Transverse colon (tissue), 4 donors: ENCODE measurements at regions of chr5 and their contacts with region 1.

Region 1: DNA sequence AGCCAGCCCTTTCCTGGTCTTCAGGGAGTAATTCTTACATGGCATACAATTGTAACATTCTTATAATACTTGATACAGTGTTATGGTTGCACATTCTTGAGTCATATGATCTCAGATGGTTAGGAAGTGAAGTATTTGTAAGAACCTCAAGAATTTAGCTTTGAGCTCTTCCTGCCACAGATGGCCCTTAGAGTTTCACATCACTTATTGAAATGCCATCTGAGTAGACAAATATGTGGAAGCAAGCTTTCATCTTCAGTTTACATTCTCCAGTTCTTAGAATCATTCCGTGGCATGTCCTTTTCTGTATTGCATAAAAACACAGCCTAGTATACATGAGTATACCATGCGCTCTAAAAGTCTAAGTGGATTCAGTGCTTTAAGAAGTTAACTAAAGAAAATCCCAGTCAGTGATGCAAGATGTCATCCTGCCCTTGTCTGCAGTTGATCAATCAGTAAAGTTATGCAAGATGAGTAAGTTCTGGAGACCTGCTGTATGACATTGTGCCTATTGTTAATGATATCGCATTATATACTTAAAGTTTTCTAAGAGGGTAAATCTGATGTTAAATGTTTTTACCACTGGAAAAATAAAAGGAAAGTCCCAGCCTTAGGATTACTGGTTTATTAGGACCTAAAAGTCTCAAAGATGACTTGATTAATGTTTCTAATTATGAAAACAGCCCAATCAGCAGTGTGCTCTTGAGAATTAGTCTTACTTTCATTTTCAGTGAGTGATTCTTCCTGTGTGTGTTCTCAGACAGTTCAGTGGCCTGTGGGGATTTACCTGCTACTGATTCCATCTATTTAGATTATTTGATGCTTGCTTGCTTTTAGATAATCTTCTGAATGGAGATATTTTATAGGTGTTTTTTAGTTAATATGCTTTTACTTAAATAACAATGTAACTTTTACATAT is 29.4 kb downstream of the RHOBTB3 start:
- DNase-seq: no peak
- H3K4me3 ChIP-seq: no peak overlapping the region
- H3K27ac ChIP-seq: peak overlapping the region; percentile 58 to 73 (median 68)
- H3K4me1 ChIP-seq: peaks cover 0 to 43% (median 29%) of the 10 kb centered on the region in 4 donors
- H3K27me3 ChIP-seq: no peaks in the 10 kb centered on the region
- CTCF ChIP-seq: no peak
- EP300 ChIP-seq: no peak
- POLR2A ChIP-seq: no peak

Region 2: GRCh38 chr5:95655575-95655974 is 105.0 kb before region 1 on chr5:
- in situ Hi-C with region 1: loop called in 1 of 4 experiments (anchors 10 kb)
- intact Hi-C with region 1: no loop called
- DNase-seq: no peak
- H3K4me3 ChIP-seq: no peak overlapping the region
- H3K27ac ChIP-seq: no peak overlapping the region
- H3K4me1 ChIP-seq: no peaks in the 10 kb centered on the region
- H3K27me3 ChIP-seq: no peaks in the 10 kb centered on the region
- CTCF ChIP-seq: no peak
- EP300 ChIP-seq: no peak
- POLR2A ChIP-seq: no peak